ENCODE measurements at regions of chr2 and their contacts with region 1.

Region 1: GRCh38 chr2:171244970-171245782 is 84.5 kb upstream of the TLK1 start:
- DNase-seq: no peak
- ATAC-seq: no peak

Region 2: GRCh38 chr2:171529914-171530313 is 284.7 kb after region 1 on chr2:
- intact Hi-C with region 1: no loop called
- DNase-seq: no peak
- ATAC-seq: no peak

Region 3: DNA sequence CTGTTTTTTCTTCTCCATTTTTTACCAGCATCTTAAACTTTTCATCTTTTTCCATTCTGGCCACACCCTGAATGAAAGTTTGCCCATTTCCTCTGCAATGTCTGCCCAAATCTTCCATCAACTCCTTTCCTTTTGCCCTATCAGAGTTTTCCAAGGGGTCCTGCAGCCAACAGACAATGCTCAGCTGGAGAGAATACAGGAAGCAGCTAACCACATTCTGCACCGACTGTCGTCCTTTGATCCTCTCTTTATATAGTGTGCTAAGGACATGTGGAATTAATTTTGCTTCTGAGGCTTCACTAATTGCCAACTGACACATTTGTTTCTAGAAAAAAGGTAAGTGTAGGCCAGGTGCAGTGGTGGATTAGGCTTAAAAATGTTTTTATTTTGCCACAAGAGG is 908.0 kb after region 1 on chr2:
- intact Hi-C with region 1: loop called (anchors 10 kb)
- DNase-seq: no peak
- ATAC-seq: no peak

Measured in Right ventricle myocardium inferior (tissue), 1 donor.